ENCODE measurements at regions of chr3 and their contacts with region 1.

Region 1: DNA sequence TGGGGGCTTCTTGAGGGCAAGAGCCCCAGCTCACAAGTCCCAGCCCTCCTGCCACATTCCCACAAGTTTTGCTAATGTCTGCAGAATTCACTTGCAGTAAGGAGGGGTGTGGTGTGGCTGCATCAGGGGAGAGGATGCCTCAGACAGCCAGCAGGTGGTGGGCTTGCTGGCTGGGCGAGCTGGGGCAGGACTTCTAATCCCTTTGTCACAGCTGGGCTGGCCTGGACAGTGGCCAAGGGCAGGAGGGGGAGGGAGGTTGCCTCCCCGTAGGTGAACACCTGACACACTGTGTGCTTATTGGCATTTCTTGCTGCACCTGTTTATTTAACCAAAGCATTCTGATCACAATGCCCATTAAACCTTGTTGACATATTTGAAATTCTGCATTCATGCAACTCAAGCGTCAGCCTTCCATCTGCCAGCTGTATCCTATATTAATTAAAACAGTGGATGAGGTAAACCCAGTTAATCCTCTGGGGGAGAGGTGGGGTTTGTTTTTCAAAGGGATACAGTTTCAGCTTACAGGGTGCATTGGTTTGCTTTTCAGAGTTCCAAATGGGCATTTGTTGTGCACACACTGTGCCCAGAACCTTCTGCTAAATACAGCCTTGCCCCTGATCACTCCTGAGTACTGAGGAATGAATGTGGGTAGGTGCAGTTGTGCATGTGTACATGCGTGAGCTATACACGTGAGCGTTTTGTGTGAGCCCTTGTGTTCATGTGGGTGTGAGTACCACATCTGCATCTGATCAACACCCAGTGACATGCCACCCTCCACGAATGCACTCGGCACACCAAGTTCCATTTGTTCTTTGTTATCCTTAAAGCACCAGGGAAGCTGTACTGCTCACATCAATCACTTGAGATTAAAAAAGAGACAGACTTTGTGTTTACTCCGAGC is 268.7 kb downstream of the XXYLT1 start:
- DNase-seq: peak; percentile 80
- H3K4me3 ChIP-seq: no peak overlapping the region
- H3K27ac ChIP-seq: no peak overlapping the region
- H3K4me1 ChIP-seq: peaks cover 5% of the 10 kb centered on the region
- H3K27me3 ChIP-seq: no peaks in the 10 kb centered on the region
- CTCF ChIP-seq: peak; percentile 67 to 83
- POLR2A ChIP-seq: no peak

Region 2: GRCh38 chr3:195015021-195015420 is 12.8 kb after region 1 on chr3:
- CTCF ChIA-PET with region 1: interaction called, 14 read pairs
- POLR2A ChIA-PET with region 1: no interaction called
- dilution Hi-C with region 1: no loop called
- intact Hi-C with region 1: no loop called
- DNase-seq: peak; percentile 57
- H3K4me3 ChIP-seq: no peak overlapping the region
- H3K27ac ChIP-seq: peak overlapping the region; percentile 29
- H3K4me1 ChIP-seq: peaks cover 22% of the 10 kb centered on the region
- H3K27me3 ChIP-seq: no peaks in the 10 kb centered on the region
- CTCF ChIP-seq: no peak
- POLR2A ChIP-seq: no peak

Region 3: DNA sequence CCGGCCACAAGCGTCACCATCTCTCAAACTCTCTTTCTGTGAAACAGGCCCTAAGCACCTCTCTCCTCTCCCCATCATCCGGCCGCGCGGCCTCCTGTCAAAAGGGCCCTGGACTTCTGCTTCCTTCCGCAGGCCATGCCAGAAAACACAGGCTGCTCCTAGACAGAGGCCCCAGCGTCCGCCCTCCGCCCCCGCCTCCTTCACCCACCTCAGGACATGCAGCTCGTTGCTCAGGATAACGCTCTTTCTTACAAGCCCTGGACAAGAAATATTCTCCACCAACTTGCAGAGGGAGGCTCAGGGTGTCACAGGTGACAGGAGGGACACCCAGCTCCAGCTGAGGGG is 56.8 kb after region 1 on chr3:
- CTCF ChIA-PET with region 1: interaction called, 11 read pairs
- POLR2A ChIA-PET with region 1: no interaction called
- dilution Hi-C with region 1: no loop called
- intact Hi-C with region 1: no loop called
- DNase-seq: peak; percentile 88
- H3K4me3 ChIP-seq: no peak overlapping the region
- H3K27ac ChIP-seq: peak overlapping the region; percentile 54
- H3K4me1 ChIP-seq: peaks cover 15% of the 10 kb centered on the region
- H3K27me3 ChIP-seq: no peaks in the 10 kb centered on the region
- CTCF ChIP-seq: no peak
- POLR2A ChIP-seq: peak; percentile 32

Region 4: GRCh38 chr3:195356151-195357086 is 354.2 kb after region 1 on chr3:
- CTCF ChIA-PET with region 1: no interaction called
- POLR2A ChIA-PET with region 1: no interaction called
- dilution Hi-C with region 1: no loop called
- intact Hi-C with region 1: no loop called
- DNase-seq: no peak
- H3K4me3 ChIP-seq: no peak overlapping the region
- H3K27ac ChIP-seq: no peak overlapping the region
- H3K4me1 ChIP-seq: no peaks in the 10 kb centered on the region
- H3K27me3 ChIP-seq: no peaks in the 10 kb centered on the region
- CTCF ChIP-seq: no peak
- POLR2A ChIP-seq: no peak